Esophagus muscularis mucosa (tissue), 4 donors: ENCODE measurements at regions of chr7 and their contacts with region 1.

Region 1: DNA sequence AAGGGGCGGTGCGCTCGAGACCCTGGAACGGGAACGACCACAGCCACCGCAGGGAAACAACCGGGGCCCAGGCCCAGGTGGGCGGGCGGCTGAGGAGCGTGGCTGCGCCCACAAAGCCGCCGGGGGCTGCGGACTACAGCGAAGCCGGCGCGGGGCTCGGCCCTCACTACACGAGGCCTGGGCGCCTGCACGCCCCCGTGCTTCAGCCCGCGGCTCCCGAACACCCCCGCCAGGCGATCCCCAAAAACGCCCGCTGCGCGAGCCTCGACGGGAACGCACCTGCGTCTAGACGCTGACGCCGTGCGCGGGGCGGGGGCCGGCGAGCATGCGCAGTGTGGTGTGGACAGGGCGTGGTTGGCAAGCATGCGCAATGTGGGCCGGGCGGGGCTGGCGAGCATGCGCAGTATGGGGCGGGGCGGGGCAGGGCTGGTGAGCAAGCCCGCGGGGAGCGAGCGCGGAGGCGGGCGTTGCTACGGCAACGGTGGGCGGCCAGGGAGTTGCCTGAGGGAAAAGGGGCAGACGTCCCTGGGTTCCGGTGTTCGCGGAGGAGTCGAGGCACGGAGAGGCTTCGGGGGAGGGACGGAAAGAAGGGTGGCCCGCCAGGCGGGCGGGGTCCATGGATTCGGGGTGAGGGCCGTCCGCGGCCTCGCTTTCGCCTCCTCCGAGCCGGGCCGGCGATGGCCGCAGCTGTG is at the start of gene RNF32:
- DNase-seq: peak; percentile 95
- H3K4me3 ChIP-seq: peak within 1 kb of the TSS; percentile 57 to 89 (median 68)
- H3K27ac ChIP-seq: peak within 1 kb of the TSS; percentile 8 to 71 (median 58)
- H3K4me1 ChIP-seq: peaks cover 7 to 21% (median 19%) of the 10 kb centered on the region in 4 donors
- H3K27me3 ChIP-seq: peaks cover 0 to 7% (median 0%) of the 10 kb centered on the region in 4 donors
- CTCF ChIP-seq: no peak
- EP300 ChIP-seq: no peak
- POLR2A ChIP-seq: no peak
- total RNA-seq, gene RNF32: 0.29 to 1.1 (median 0.83) TPM in 3 of 4 donors, not detected in the other

Region 2: DNA sequence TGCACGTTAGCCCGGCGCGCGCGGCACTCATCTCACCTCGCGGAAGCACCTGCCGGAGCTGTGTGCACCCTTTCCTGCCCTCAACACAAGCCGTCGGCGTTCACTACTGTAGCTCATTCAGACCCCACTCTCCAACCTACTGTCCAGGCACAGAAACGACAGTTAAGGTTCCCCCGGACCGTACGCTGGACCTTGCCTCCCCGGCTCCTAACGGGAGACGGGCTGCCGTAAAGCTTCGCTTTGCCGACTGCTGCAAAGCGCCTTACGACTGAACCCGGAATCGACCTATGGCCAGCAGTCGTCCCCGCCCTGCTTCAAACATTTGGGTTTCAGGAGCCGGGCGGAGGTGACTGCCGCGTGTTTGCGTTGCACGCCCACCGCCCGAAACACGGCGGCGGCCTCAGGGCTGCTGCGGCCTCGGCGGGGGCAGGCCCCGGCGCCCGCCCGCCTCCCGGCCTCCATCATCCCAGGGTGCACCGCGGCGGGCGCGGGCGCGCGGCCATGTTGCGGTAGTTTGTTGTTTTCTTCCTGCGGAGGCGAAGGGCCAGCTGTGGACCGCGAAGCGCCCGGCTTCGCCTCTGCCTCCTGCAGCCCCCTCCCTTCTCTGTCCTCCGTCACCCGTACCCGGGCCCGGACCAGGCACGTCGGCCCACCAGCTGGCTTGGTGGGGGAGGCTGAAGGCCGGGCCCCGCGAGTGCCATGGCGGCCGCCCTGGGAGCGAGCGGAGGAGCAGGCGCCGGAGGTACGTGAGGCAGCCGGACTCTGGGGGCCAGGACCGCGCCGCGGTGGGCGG is 996.0 kb before region 1 on chr7 and contains the start of gene RBM33:
- intact Hi-C with region 1: loop called (anchors 10 kb)
- DNase-seq: peak; percentile 93
- H3K4me3 ChIP-seq: peak within 1 kb of the TSS; percentile 77 to 99 (median 84)
- H3K27ac ChIP-seq: peak within 1 kb of the TSS; percentile 90 to 95 (median 90)
- H3K4me1 ChIP-seq: peaks cover 20 to 33% (median 28%) of the 10 kb centered on the region in 4 donors
- H3K27me3 ChIP-seq: no peaks in the 10 kb centered on the region
- CTCF ChIP-seq: peak in 1 of 3 experiments; percentile 25
- EP300 ChIP-seq: no peak
- POLR2A ChIP-seq: peak; percentile 53
- total RNA-seq, gene RBM33: 27.0 to 34.5 (median 32.6) TPM

Region 3: GRCh38 chr7:156534925-156535324 is 105.5 kb before region 1 on chr7:
- intact Hi-C with region 1: no loop called
- DNase-seq: peak; percentile 53
- H3K4me3 ChIP-seq: no peak overlapping the region
- H3K27ac ChIP-seq: no peak overlapping the region
- H3K4me1 ChIP-seq: no peaks in the 10 kb centered on the region
- H3K27me3 ChIP-seq: peaks cover 0 to 3% (median 0%) of the 10 kb centered on the region in 4 donors
- CTCF ChIP-seq: no peak
- EP300 ChIP-seq: no peak
- POLR2A ChIP-seq: no peak

Region 4: DNA sequence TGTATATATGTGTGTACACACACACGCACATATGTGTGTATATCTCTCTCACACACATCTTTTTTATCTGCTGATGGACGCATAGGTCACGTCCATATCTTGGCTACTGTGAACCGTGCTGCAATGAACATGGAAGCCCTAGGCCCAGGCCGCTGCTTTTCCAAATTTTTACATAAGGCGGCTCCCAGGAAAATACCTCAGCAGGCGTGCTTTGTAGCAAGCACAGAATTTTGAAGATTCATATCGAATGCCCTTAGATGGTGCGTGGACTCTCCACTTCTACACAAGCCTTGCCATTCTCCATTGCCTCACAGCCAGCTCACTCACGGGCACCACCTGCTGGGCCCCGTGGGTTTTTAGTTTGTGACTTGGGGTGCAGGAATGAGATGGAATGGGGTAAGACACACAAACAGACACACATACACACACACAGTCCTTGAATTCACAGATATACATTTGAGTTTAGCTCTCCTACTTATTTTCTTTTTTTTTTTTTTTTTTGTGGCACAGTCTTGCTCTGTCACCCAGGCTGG is 57.7 kb before region 1 on chr7:
- intact Hi-C with region 1: loop called (anchors 10 kb)
- DNase-seq: no peak
- H3K4me3 ChIP-seq: no peak overlapping the region
- H3K27ac ChIP-seq: no peak overlapping the region
- H3K4me1 ChIP-seq: no peaks in the 10 kb centered on the region
- H3K27me3 ChIP-seq: peaks cover 0 to 10% (median 0%) of the 10 kb centered on the region in 4 donors
- CTCF ChIP-seq: no peak
- EP300 ChIP-seq: no peak
- POLR2A ChIP-seq: no peak